Activated T-helper 2 cell treated with anti-CD3 and anti-CD28 coated beads, Interferon-gamma antibody, Interleukin-2, Interleukin-4, amounts not matched to agents 10 μg/mL and 5 μg/mL and 100 μg/mL, durations not matched to agents 14 hours and 24 hours and 36 hours (primary cell): ENCODE measurements at regions of chr9 and their contacts with region 1.

Region 1: GRCh38 chr9:94166237-94166963 is 82.1 kb downstream of the PTPDC1 start:
- DNase-seq: peak; percentile 91
- H3K4me3 Mint-ChIP-seq: peak overlapping the region; percentile 88
- H3K27ac Mint-ChIP-seq: peak overlapping the region; percentile 84
- H3K4me1 Mint-ChIP-seq: peaks cover 44% of the 10 kb centered on the region
- H3K27me3 Mint-ChIP-seq: no peaks in the 10 kb centered on the region

Region 2: DNA sequence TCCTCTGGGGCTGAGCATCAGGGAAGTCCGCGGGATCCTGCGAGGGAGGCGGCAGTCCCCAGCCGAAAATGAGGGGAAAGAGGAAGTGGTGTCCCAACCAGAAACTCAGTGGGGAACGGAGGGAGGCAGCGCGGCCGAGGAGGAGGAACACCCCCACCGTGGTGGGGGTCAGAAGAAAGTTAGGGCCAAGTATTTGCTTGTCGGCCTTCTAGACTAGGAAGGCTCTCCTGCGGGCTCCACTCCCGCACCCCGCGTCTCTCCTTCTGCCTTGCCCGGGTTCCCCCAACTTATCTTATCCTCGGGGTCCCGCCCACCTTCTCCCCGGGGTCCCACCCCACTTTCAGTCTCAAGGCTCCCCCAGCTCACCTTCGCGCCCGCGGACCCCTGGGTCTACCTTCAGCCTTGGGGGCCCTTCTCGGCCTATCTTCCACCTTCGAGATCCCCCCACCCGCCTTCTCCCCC is 590.6 kb before region 1 on chr9:
- intact Hi-C with region 1: loop called (anchors 10 kb)
- DNase-seq: peak; percentile 45
- H3K4me3 Mint-ChIP-seq: peak overlapping the region; percentile 87
- H3K27ac Mint-ChIP-seq: peak overlapping the region; percentile 82
- H3K4me1 Mint-ChIP-seq: peaks cover 25% of the 10 kb centered on the region
- H3K27me3 Mint-ChIP-seq: no peaks in the 10 kb centered on the region

Region 3: DNA sequence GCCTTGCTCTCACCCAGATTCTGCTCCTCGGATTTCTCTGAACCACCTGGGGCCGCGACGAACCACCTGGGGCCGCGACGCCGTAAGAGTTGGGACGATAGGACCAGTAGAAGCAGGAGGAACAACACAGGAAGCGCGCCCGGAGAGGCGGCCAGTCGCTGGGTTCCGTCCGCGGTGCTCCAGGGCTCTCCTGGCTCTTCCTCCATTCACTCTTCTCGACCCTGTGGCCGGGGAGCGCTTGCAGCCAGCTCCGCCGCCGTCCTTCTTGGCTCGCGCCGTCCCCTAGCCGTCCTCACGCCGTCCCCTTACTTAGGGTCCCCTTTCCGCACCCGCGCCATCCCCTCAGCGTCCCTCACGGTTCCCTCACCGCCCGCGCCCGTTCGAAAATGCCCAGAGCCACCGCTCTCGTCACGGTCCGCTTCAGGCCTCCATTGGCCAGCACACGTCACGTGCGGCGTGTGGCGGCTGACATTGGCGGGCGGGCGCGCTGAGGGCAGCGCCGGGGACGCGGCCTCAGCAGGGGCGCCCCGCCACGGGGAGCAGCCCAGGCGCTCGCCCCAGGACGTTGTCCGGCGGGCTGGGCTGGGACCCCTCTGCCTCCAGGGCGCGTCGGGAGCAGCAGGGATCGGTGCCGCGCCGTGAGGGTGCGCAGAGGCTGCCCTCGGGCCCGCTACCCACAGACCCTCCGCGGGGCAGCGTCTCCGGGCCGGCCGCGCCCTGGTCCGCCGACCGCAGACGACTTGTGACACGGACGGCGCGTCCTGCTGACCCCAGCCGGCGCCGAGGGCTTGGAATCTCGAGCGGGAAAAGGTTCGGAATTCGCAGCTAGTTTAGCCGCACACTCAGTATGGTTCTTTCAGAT is 135.9 kb before region 1 on chr9:
- intact Hi-C with region 1: loop called (anchors 1 kb)
- DNase-seq: peak; percentile 78
- H3K4me3 Mint-ChIP-seq: peak overlapping the region; percentile 88
- H3K27ac Mint-ChIP-seq: peak overlapping the region; percentile 88
- H3K4me1 Mint-ChIP-seq: peaks cover 15% of the 10 kb centered on the region
- H3K27me3 Mint-ChIP-seq: peaks cover 6% of the 10 kb centered on the region

Region 4: DNA sequence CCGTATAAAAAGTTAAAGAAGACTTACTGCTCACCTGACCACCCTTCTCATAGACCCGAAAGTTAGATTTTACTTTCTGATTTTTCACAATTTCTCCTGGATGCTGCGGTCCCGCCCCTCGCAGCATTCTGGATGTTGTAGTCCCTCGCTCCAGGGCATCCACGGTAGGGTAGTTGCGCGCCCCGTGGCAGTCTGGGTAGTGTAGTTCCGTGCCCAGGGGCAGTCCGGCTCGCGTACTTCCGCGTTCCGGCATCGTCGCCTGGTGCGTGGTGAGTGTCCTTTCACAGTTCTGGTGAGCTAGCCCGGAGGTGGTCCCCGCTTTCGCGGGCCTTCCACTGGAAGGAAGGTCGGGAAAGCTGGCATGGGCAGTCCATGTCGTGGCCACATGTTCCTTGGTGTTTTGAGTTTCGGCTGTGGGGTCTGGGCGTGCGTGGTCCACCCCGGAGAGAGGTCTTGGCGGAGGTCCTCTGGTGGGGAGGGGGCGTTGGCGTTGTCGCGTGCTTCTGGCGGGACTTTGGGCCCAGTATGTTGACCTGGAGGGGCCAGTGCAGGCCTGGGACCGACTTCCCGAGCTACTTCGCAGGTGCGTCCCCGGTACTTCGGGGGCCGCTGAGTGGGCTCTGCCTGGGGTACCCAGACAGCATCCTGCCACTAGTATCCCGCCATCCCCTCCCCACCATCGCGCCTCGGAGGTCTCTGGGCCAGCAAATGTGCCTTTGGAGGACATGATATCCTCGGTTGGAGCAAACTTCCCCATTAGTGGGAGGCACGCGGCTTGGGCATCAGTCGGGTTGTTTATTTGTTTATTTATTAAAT is 92.9 kb after region 1 on chr9 and contains the start of gene ZNF169:
- intact Hi-C with region 1: loop called (anchors 1 kb)
- DNase-seq: peak; percentile 83
- H3K4me3 Mint-ChIP-seq: peak within 1 kb of the TSS; percentile 100
- H3K27ac Mint-ChIP-seq: peak within 1 kb of the TSS; percentile 98
- H3K4me1 Mint-ChIP-seq: peaks cover 16% of the 10 kb centered on the region
- H3K27me3 Mint-ChIP-seq: peaks cover 12% of the 10 kb centered on the region
- total RNA-seq, gene ZNF169: 8.9 and 9.0 TPM in 2 replicates